ENCODE measurements at regions of chr10 and their contacts with region 1.

Region 1: DNA sequence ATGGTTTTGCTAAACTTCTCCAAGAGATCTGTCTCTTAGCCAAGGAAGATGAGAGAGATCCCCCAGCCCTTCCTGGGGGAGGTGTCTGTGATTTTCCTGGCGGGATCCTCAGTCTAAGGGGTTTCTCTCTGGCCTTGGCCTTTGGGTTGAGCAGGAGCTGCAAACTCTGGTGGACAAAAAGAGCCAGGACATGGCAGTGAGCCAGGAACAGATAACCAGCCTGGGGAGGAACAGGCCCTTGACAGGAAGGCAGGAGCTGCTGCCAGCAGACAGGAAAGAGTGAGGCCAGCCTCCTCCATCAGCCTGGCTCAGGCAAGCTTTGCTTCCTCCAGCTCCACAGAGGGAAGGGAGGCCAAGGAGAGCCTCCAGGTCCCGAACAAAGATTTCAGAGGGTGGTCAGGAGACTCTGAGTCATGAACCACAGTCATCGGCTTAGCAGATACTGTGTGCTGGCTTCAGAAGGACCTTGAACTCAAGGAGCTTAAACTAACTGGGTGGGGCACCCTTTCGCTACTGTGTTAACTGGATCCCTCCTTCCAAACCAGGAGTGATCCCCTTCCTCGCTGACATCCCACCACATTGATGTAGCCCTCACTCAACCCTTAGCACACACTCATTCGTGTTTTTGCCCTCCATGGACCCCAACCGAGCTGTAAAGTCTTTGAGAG is 34.7 kb downstream of the DDIT4 start:
- DNase-seq: no peak
- H3K4me3 Mint-ChIP-seq: peak overlapping the region; percentile 31
- H3K27ac Mint-ChIP-seq: peak overlapping the region; percentile 85
- H3K4me1 Mint-ChIP-seq: peaks cover 59% of the 10 kb centered on the region
- H3K27me3 Mint-ChIP-seq: no peaks in the 10 kb centered on the region

Region 2: DNA sequence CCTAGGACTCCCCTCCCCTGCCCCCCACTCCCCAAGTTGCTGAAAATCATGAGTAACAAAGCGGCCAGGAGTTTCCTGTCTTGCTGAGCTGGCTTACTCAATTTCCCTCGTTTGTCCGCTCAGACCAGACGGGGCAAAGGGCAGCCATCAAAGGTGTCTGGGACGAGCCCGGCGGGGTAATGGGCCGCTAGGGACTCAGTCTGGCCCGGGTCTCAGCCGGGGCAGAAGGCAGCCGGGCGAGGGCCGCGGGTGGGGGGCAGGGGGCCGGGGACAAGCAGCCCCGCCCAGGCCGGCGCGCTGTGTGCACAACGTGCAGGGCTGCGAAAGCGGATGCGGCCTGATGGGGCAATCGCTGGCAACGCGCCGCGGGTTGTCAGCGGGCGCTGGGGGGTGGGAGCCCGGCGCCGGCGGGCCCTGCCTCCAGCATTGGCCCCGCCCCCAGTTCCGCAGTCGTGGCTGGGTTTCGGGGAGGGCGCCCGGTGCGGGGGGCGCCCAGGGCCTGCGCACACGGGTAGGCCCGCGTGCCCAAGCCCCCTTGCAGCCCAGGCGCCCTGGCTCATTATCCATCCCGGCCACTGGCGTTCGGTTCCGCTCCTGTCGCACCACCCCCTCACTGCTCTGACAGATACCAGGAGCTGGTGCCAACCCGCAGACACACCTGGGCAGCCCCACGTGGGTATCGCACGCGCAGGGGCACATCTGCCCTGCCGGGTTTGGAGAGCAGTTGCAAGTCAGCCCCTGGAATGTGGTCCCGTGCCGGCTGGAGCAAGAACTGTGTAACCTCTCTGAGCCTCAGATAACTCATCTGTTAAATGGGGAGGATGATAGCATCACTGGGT is 11.2 kb after region 1 on chr10:
- intact Hi-C with region 1: loop called (anchors 1 kb)
- DNase-seq: peak; percentile 84
- H3K4me3 Mint-ChIP-seq: peak overlapping the region; percentile 80
- H3K27ac Mint-ChIP-seq: peak overlapping the region; percentile 98
- H3K4me1 Mint-ChIP-seq: peaks cover 70% of the 10 kb centered on the region
- H3K27me3 Mint-ChIP-seq: no peaks in the 10 kb centered on the region

Region 3: GRCh38 chr10:72328045-72328828 is 19.8 kb after region 1 on chr10:
- intact Hi-C with region 1: loop called (anchors 1 kb)
- DNase-seq: no peak
- H3K4me3 Mint-ChIP-seq: peak overlapping the region; percentile 99
- H3K27ac Mint-ChIP-seq: peak overlapping the region; percentile 84
- H3K4me1 Mint-ChIP-seq: peaks cover 62% of the 10 kb centered on the region
- H3K27me3 Mint-ChIP-seq: no peaks in the 10 kb centered on the region

Measured in activated T-helper 1 cell treated with anti-CD3 and anti-CD28 coated beads, Interleukin-12 subunit alpha, Interleukin-12 subunit beta, Interleukin-2, Interleukin-4 antibody, amounts not matched to agents 30 ng/mL and 10 ng/mL and 1 ng/mL, durations not matched to agents 14 hours and 24 hours and 36 hours (primary cell).